Common myeloid progenitor, CD34-positive (primary cell): ENCODE measurements at regions of chr3 and their contacts with region 1.

Region 1: DNA sequence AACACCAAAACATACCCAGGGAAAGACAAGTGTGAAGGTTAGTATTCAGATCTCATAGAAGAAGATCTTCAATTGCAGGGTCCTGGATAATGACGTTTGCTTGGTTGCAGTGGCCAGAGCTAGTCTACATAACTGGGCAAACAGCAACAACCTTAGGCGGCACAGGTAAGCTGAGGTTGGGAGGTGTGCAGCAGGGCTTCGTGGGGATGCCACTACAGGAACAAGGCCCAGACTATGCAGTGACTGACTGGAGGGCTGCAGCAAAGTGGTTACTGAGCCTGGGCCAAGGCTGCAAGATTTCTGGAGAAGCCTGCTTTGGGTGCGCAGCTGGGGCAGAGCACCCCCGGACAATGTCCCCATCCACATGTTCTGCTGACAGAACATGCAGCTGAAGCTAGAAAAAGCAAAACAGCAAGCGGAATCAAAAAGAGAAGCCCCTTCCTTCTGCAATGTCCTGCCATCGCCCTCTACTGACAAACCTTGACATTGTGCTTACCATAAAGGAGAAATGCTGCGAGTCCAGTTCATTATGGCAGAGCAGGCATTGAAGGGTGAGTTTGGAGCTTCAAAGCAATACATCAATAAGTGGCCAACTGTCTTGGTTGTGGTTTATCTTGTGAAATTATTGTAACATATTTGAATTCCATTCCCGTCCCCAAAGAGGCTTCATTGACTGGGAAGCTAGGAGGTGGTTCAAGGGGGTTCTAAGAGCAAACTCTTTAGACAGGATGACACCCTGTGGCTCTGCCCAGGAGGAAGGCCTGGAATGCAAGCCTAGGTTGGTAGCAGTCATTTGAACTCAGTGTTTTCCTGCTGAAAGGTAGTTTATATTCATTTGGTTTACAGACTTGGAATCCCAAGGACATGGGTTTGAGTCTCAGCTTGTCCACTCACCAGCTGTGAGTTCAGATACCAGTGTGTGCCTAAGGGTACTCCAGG is 217.0 kb downstream of the PDCD6IP start:
- DNase-seq: peak in 2 of 3 donors; percentile 62
- H3K4me3 ChIP-seq: no peak overlapping the region
- H3K27ac ChIP-seq: peak overlapping the region in 1 of 2 experiments; percentile 69
- H3K4me1 ChIP-seq: peaks cover 24 to 54% (median 44%) of the 10 kb centered on the region in 4 experiments
- H3K27me3 ChIP-seq: no peaks in the 10 kb centered on the region

Region 2: DNA sequence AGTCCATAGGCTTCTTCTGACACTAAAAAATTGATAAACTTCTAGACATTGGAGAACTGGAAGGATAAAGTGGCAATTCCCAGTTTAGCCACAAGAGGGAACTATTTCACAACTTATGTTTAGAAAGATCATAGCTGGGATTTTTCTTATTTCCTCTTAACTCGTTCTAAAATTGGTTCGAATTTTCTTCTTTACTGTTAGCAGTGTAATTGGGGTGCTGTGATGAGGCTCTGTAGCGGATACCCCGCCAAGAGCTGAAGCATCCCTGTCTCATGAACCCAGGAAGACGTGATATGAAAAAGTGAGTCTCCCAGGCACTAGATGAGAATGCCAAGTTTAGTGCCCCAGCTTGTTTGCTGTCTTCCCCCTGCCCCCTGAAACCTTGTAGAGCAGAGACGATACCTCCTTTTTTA is 131.9 kb before region 1 on chr3:
- CTCF ChIA-PET with region 1: interaction called, 15 read pairs
- POLR2A ChIA-PET with region 1: no interaction called
- DNase-seq: peak; percentile 42 to 66 (median 51)
- H3K4me3 ChIP-seq: peak overlapping the region in 1 of 7 experiments; percentile 29
- H3K27ac ChIP-seq: no peak overlapping the region
- H3K4me1 ChIP-seq: peaks cover 0 to 6% (median 3%) of the 10 kb centered on the region in 4 experiments
- H3K27me3 ChIP-seq: no peaks in the 10 kb centered on the region